Caco-2 (cell line): ENCODE measurements at regions of chr11 and their contacts with region 1.

Region 1: DNA sequence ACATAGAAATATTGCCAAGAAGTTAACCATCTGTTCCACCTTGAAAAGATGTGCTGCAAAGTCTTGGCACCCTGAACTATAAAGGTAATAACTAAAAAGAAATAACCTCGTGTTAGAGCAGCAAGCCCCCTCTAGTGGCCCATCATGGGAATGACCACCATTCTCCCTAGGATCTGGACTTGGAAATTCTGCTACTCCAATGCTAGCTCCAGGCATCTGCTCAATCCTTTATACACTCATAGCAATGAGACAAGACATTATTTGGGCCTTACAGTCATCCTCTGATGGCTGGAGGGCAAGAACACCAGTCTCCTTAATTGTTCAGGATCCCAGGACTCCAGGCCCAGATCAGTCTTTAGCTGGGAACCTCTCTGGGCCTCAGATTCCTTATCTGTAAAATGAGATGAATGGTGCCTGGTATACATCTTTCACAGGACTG is 76.0 kb downstream of the CWC15 start:
- DNase-seq: peak; percentile 69 to 76
- H3K4me3 ChIP-seq: no peak overlapping the region
- H3K4me3 Mint-ChIP-seq: no peak overlapping the region
- H3K27ac Mint-ChIP-seq: no peak overlapping the region
- H3K4me1 ChIP-seq: no peaks in the 10 kb centered on the region
- H3K4me1 Mint-ChIP-seq: no peaks in the 10 kb centered on the region
- H3K27me3 ChIP-seq: no peaks in the 10 kb centered on the region
- H3K27me3 Mint-ChIP-seq: no peaks in the 10 kb centered on the region
- CTCF ChIP-seq: peak; percentile 95 to 99

Region 2: DNA sequence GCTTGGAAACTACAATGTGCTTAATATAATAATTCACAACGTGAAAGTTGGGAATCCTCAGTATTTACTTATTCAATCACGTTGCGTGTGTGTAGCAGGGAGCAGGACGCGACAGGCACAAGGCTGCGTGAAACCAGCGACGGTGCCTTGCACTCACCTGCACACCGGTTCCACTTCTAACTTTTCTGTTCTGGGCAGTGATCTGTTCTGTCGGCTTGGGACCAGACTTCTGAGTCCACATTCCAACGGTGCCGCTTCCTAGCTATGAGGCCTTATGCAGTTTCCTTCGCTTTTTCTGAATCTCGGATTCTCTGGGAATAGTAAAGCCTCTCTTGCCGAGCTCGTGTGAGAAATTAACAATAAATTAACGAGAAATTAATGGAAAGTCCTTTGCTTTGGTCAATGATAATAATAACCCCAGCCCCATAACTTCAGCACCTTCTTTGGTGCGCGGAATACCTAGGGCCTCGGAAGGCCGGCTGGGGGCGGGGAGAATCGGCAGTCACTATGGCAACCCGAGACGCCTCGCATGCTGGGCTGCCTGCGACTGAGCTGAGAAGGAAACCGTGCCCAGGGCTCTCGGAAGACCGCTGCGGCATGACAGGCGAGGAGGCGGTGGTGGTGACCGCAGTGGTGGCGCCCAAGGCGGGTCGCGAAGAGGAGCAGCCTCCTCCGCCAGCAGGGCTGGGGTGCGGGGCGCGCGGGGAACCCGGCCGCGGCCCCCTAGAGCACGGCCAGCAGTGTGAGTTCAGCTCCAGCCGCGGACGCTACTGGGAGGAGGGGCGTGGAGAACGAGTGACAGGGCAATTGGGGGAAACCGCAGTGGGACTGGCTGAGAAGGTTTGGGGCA is 385.2 kb before region 1 on chr11 and contains the start of gene C11orf97:
- CTCF ChIA-PET with region 1: no interaction called
- POLR2A ChIA-PET with region 1: no interaction called
- intact Hi-C with region 1: loop called (anchors 10 kb)
- DNase-seq: peak; percentile 83 to 86
- H3K4me3 ChIP-seq: peak within 1 kb of the TSS; percentile 50
- H3K4me3 Mint-ChIP-seq: peak within 1 kb of the TSS; percentile 87
- H3K27ac Mint-ChIP-seq: peak within 1 kb of the TSS; percentile 27
- H3K4me1 ChIP-seq: no peaks in the 10 kb centered on the region
- H3K4me1 Mint-ChIP-seq: no peaks in the 10 kb centered on the region
- H3K27me3 ChIP-seq: no peaks in the 10 kb centered on the region
- H3K27me3 Mint-ChIP-seq: peaks cover 10% of the 10 kb centered on the region
- CTCF ChIP-seq: no peak
- total RNA-seq, gene C11orf97: not detected in 2 replicates

Region 3: GRCh38 chr11:94741022-94741679 is 156.2 kb before region 1 on chr11:
- CTCF ChIA-PET with region 1: no interaction called
- POLR2A ChIA-PET with region 1: no interaction called
- intact Hi-C with region 1: no loop called
- DNase-seq: peak; percentile 64 to 69
- H3K4me3 ChIP-seq: no peak overlapping the region
- H3K4me3 Mint-ChIP-seq: no peak overlapping the region
- H3K27ac Mint-ChIP-seq: peak overlapping the region; percentile 48
- H3K4me1 ChIP-seq: peaks cover 54% of the 10 kb centered on the region
- H3K4me1 Mint-ChIP-seq: peaks cover 15% of the 10 kb centered on the region
- H3K27me3 ChIP-seq: no peaks in the 10 kb centered on the region
- H3K27me3 Mint-ChIP-seq: no peaks in the 10 kb centered on the region
- CTCF ChIP-seq: peak; percentile 49 to 64

Region 4: GRCh38 chr11:94786264-94787126 is 110.9 kb before region 1 on chr11:
- CTCF ChIA-PET with region 1: interaction called, 27 read pairs
- POLR2A ChIA-PET with region 1: no interaction called
- intact Hi-C with region 1: loop called (anchors 1 kb)
- DNase-seq: peak in 1 of 2 experiments; percentile 65
- H3K4me3 ChIP-seq: no peak overlapping the region
- H3K4me3 Mint-ChIP-seq: no peak overlapping the region
- H3K27ac Mint-ChIP-seq: peak overlapping the region; percentile 70
- H3K4me1 ChIP-seq: peaks cover 58% of the 10 kb centered on the region
- H3K4me1 Mint-ChIP-seq: peaks cover 24% of the 10 kb centered on the region
- H3K27me3 ChIP-seq: no peaks in the 10 kb centered on the region
- H3K27me3 Mint-ChIP-seq: no peaks in the 10 kb centered on the region
- CTCF ChIP-seq: peak; percentile 75 to 89